ENCODE measurements at regions of chr4 and their contacts with region 1.

Region 1: DNA sequence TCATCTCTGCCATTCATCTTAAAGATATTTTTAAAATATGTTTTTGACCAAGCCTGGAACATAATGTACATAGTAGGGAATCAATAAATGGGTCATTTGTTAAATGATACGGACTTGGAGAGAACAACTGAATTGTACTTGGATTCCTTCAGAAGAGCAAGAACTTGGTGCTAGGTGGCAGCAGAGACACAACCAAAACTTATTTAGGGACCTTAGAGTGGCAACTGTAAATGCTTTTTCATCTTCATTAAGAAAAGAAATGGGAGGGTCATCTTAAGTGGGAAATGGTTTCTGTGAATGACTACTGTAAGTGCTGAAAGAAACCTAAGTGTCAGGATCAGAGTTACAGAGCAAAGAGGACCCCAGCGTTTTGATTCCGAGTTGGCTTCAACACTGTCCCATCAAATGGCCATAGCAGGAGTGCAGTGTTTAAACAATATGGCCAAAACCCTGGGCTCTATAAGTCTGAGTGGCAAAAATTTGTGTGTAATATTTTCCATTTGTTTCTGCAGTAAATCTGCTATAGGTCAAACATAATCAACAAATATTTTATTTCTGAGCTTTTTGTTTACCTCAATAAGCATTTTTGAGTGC is 213.6 kb downstream of the PALLD start:
- DNase-seq: no peak

Region 2: GRCh38 chr4:168758351-168758876 is 48.0 kb after region 1 on chr4:
- intact Hi-C with region 1: loop called (anchors 1 to 10 kb)
- DNase-seq: no peak

Region 3: DNA sequence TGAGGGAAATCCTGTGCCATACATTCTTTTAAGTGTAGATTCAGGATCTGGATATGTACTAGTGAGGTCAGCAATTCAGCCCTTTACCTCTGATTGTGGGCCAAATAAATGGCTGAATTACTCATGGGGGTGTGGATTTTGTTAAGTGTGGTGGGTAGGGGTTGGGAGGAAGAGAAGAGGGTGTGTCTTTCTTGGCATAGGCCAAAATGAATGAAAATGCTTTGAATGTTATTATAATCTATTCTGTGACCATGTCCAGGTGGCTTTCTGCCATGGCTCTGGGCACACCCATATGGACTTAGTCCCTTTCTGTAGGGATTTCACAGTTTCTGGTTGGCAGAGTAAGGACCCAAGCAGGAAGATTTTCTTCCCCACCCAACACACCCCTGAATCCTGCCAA is 55.3 kb after region 1 on chr4:
- intact Hi-C with region 1: loop called in 1 of 2 experiments (anchors 10 kb)
- DNase-seq: no peak

Region 4: DNA sequence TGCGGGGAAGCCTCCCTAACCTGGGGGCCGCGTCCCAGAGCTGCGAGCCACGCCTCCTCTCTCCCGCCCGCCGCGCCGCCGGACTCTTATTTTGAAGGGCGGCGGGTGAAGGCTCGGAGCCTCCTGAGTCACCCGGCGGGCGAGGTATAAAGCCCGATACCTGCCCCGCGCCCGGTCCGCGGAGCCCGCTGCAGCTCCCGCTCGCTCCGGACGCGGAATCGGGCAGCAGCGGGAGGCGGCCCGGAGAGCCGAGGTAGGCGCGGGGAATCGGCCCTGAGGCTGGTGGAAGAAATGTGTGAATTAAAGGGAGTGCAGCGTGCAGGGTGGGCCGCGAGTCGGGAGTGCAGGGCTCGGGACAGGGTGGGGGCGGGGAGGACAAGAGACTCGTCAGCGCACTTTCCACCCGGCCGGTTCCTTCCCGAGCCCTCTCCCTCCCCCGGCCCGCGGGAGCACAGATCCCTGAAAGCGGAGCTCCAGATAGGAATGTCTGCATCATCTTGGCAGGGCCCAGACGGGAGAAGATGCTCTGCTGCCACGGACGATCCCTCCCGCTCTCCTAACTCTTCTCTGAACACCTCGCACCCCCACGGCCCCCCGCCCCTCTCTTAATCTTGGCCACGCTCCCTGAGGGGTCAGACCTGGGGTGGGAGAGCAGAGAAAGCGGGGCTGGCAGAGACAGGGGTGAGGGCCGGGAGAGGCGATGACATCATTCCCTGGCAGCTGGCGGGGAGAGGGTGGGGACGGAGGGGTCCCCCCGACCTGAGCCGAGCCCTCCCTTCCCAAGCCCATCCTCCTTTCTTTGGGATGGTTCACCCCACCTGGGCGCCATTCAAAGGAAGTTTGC is 121.7 kb after region 1 on chr4:
- intact Hi-C with region 1: loop called in 1 of 2 experiments (anchors 5 kb)
- DNase-seq: peak; percentile 95

Region 5: GRCh38 chr4:168880811-168881595 is 170.6 kb after region 1 on chr4:
- intact Hi-C with region 1: loop called in 1 of 2 experiments (anchors 10 kb)
- DNase-seq: no peak

Region 6: GRCh38 chr4:168917138-168917779 is 206.8 kb after region 1 on chr4:
- intact Hi-C with region 1: loop called in 1 of 2 experiments (anchors 10 kb)
- DNase-seq: no peak

Measured in posterior vena cava (tissue), 2 donors.